Activated CD4-positive, alpha-beta memory T cell treated with anti-CD3 and anti-CD28 coated beads for 36 hours (primary cell): ENCODE measurements at regions of chr19 and their contacts with region 1.

Region 1: GRCh38 chr19:49640113-49640898 is at the start of gene RRAS:
- DNase-seq: peak; percentile 100
- H3K4me3 Mint-ChIP-seq: peak within 1 kb of the TSS; percentile 99
- H3K27ac Mint-ChIP-seq: peak within 1 kb of the TSS; percentile 100
- H3K4me1 Mint-ChIP-seq: peaks cover 50% of the 10 kb centered on the region
- H3K27me3 Mint-ChIP-seq: no peaks in the 10 kb centered on the region
- total RNA-seq, gene RRAS: 12.2 to 14.4 TPM

Region 2: GRCh38 chr19:49451430-49452181 is 188.7 kb before region 1 on chr19 and contains the start of gene PIH1D1:
- CTCF ChIA-PET with region 1: no interaction called
- POLR2A ChIA-PET with region 1: no interaction called
- intact Hi-C with region 1: loop called (anchors 2 kb)
- DNase-seq: peak; percentile 98
- H3K4me3 Mint-ChIP-seq: peak within 1 kb of the TSS; percentile 100
- H3K27ac Mint-ChIP-seq: peak within 1 kb of the TSS; percentile 99
- H3K4me1 Mint-ChIP-seq: peaks cover 38% of the 10 kb centered on the region
- H3K27me3 Mint-ChIP-seq: no peaks in the 10 kb centered on the region
- total RNA-seq, gene PIH1D1: 117 to 129 TPM

Region 3: GRCh38 chr19:49580264-49581006 is 59.9 kb before region 1 on chr19 and contains the start of gene NOSIP:
- CTCF ChIA-PET with region 1: no interaction called
- POLR2A ChIA-PET with region 1: interaction called, 7 read pairs
- intact Hi-C with region 1: loop called (anchors 1 kb)
- DNase-seq: peak; percentile 98
- H3K4me3 Mint-ChIP-seq: peak within 1 kb of the TSS; percentile 97
- H3K27ac Mint-ChIP-seq: peak within 1 kb of the TSS; percentile 92
- H3K4me1 Mint-ChIP-seq: peaks cover 29% of the 10 kb centered on the region
- H3K27me3 Mint-ChIP-seq: no peaks in the 10 kb centered on the region
- total RNA-seq, gene NOSIP: 80.3 to 84.3 TPM

Region 4: GRCh38 chr19:49624967-49625910 is 15.1 kb before region 1 on chr19:
- CTCF ChIA-PET with region 1: no interaction called
- POLR2A ChIA-PET with region 1: no interaction called
- intact Hi-C with region 1: no loop called
- DNase-seq: no peak
- H3K4me3 Mint-ChIP-seq: no peak overlapping the region
- H3K27ac Mint-ChIP-seq: no peak overlapping the region
- H3K4me1 Mint-ChIP-seq: no peaks in the 10 kb centered on the region
- H3K27me3 Mint-ChIP-seq: no peaks in the 10 kb centered on the region

Region 5: DNA sequence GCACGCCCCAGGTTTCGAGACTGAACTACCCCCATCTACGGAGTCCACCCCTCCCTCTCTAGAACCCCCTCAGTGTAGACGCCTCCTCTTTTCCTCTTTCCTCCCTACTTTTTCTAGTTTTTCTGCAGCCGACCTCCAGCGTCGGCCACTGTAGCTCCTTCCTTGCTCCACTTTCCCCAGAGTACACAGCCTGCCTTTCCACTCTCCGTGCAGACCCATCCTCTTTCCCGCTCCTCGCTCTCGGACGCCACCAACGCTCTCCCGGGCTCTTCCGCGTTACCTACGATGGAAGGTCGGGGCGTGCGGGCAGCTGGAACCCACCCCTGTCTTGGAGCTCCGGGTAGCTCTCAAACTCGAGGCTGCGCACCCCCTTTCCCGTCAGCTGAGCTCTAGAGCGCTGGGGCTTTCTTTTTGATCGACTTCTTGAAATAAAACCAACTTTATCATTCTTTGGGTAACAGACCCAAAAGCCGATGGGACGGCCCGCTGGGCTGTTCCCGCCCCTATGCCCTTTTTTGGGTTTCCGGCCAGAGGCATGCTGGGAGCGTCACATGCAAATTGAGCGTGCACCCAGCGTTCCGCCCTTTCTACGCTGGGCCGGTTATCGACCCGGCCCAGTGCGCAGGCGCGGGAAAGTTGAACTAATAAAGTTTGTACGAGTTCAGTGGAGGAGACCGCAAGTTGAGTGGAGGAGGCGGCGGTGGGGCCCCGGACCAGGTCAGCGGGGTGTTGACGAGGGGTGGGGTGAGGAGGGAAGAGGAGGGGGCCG is 25.2 kb after region 1 on chr19 and contains the starts of genes BCL2L12 and IRF3:
- CTCF ChIA-PET with region 1: interaction called, 26 read pairs
- POLR2A ChIA-PET with region 1: interaction called, 20 read pairs
- intact Hi-C with region 1: loop called (anchors 1 kb)
- DNase-seq: peak; percentile 99
- H3K4me3 Mint-ChIP-seq: peak within 1 kb of the TSS; percentile 99
- H3K27ac Mint-ChIP-seq: peak within 1 kb of the TSS; percentile 96
- H3K4me1 Mint-ChIP-seq: peaks cover 32% of the 10 kb centered on the region
- H3K27me3 Mint-ChIP-seq: no peaks in the 10 kb centered on the region
- total RNA-seq, gene BCL2L12: 87.2 to 89.1 TPM
- total RNA-seq, gene IRF3: 143 to 156 TPM

Region 6: DNA sequence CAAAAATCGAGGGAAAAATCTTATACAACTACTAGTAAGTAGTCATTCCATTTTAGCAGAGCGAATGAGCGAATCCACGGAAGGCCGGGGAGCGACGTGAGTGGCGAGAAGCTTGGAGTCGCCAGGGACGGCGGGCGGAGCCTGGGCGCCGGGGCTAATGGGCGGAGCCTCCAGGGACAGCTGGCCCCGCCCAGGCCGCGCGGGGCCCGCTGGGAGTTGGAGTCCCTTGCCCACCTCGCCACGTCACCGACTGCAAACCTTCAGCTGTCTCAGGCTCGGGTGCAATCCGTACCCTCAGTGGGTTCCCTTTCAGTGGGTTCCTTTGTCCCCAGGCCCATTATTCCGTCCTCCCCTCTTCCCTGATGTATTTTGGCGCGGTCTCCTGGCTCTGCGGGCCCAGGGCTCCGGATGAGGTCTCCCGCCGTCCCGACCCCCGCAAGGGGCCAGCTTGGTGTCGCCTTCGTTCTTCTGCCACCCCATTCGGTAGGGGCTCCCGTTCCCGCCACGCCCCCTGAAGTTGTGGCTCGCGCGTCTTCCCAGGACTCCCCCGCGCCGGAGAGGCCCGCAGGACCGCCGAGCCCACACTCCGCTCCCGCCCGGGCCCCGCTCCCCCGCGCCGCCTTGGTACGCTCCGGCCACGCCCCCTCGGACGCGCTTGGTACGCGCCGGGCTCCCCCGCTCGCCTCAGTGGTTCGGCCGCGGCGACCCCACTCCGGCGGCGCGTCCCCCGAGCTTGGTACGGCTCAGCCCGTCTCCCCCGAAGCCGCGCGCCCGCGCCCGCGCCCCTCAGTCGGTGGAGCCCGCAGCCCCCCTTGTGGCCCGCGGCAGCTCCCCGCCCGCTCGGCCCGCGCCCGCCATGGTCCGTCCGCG is 210.4 kb after region 1 on chr19 and contains the start of gene PTOV1:
- CTCF ChIA-PET with region 1: no interaction called
- POLR2A ChIA-PET with region 1: no interaction called
- intact Hi-C with region 1: loop called (anchors 2 kb)
- DNase-seq: peak; percentile 93
- H3K4me3 Mint-ChIP-seq: peak within 1 kb of the TSS; percentile 86
- H3K27ac Mint-ChIP-seq: peak within 1 kb of the TSS; percentile 95
- H3K4me1 Mint-ChIP-seq: peaks cover 41% of the 10 kb centered on the region
- H3K27me3 Mint-ChIP-seq: no peaks in the 10 kb centered on the region
- total RNA-seq, gene PTOV1: 105 to 108 TPM

Region 7: DNA sequence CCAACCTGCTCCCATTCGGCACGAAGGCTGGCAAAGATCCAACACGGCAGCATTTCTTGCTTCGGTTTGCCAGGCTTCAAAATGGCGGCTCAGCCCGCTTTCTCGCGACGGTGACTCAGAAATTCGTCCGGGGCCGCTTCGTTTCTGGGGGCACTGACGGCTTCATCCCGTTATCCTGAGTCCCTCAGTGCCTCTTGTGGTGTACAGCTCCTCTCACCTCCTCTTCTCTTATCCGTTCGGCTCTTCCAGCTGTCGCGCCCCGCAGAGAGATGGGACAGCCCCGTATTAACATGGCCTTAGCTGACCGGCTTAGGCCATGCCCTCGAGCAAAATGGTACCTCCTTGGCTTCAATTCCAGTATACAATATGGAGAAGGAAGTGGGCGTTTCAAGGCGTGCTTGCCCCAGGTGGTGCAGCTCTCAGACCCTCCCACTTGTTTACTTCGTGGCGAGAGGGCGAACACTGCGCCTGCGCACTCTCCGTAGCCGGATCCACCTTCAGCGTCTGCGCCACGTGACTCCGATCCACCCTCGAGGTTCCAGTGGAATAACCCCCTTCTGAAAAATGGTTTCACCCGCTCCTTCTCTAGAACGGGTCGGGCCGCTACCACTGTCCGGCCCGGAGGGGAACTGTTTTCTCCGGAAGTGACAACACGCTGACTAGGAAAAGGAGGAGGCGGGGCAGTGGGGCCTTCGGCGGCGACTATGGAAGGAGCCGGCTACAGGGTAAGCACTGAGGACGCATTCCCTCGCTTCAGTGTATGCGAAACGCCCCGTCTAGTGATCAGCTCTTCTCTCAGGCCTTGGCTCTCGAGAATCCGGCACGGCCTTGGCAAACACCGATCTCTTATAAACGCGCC is 236.9 kb after region 1 on chr19 and contains the starts of genes AKT1S1 and TBC1D17:
- CTCF ChIA-PET with region 1: no interaction called
- POLR2A ChIA-PET with region 1: no interaction called
- intact Hi-C with region 1: loop called (anchors 1 kb)
- DNase-seq: peak; percentile 99
- H3K4me3 Mint-ChIP-seq: no peak within 1 kb of the TSS
- H3K27ac Mint-ChIP-seq: no peak within 1 kb of the TSS
- H3K4me1 Mint-ChIP-seq: peaks cover 26% of the 10 kb centered on the region
- H3K27me3 Mint-ChIP-seq: no peaks in the 10 kb centered on the region
- total RNA-seq, gene AKT1S1: 19.6 TPM
- total RNA-seq, gene TBC1D17: 32.5 to 34.7 TPM